SK-N-SH (cell line): ENCODE measurements at regions of chr17 and their contacts with region 1.

Region 1: GRCh38 chr17:29369831-29370735 is 20.1 kb upstream of the TAOK1 start:
- DNase-seq: peak; percentile 70
- H3K4me3 ChIP-seq: peak overlapping the region; percentile 23 to 60; a peak in 3 of 4 replicates
- H3K27ac ChIP-seq: peak overlapping the region; percentile 4 to 47; a peak in 2 of 4 replicates
- H3K4me1 ChIP-seq: peaks cover 0 to 10% of the 10 kb centered on the region in 2 experiments; a peak in 2 of 4 replicates
- H3K27me3 ChIP-seq: no peaks in the 10 kb centered on the region
- CTCF ChIP-seq: peak; percentile 77
- EP300 ChIP-seq: no peak
- RAD21 ChIP-seq: peak; percentile 82

Region 2: DNA sequence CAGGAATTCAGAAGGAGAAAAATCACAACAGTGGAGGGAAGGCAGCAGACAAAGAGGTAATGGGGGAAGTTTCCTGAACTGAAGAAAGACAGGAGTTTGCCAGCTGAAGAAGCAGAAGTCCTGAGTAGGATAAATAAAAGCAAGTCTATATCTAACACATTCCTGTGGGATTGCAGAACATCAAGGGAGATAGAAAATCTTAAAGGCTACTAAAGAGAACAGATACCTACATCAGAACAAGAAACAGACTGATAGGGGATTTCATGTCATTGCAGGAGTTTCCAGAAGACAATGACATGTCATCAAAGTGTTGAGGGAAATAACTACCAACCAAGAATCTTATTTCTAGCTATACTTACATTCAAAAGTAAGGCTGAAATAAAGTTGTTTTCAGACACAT is 144.7 kb before region 1 on chr17:
- CTCF ChIA-PET with region 1: no interaction called
- POLR2A ChIA-PET with region 1: no interaction called
- DNase-seq: no peak
- H3K4me3 ChIP-seq: no peak overlapping the region
- H3K27ac ChIP-seq: no peak overlapping the region
- H3K4me1 ChIP-seq: peaks cover 0 to 4% of the 10 kb centered on the region in 2 experiments; a peak in 1 of 4 replicates
- H3K27me3 ChIP-seq: no peaks in the 10 kb centered on the region
- CTCF ChIP-seq: no peak
- EP300 ChIP-seq: no peak
- RAD21 ChIP-seq: no peak

Region 3: GRCh38 chr17:29273924-29274323 is 96.2 kb before region 1 on chr17:
- CTCF ChIA-PET with region 1: no interaction called
- POLR2A ChIA-PET with region 1: no interaction called
- DNase-seq: no peak
- H3K4me3 ChIP-seq: no peak overlapping the region
- H3K27ac ChIP-seq: no peak overlapping the region
- H3K4me1 ChIP-seq: no peaks in the 10 kb centered on the region; a peak in 1 of 4 replicates
- H3K27me3 ChIP-seq: no peaks in the 10 kb centered on the region
- CTCF ChIP-seq: no peak
- EP300 ChIP-seq: no peak
- RAD21 ChIP-seq: no peak

Region 4: GRCh38 chr17:29357821-29358232 is 12.3 kb before region 1 on chr17:
- CTCF ChIA-PET with region 1: interaction called, 34 read pairs
- POLR2A ChIA-PET with region 1: no interaction called
- DNase-seq: no peak
- H3K4me3 ChIP-seq: no peak overlapping the region
- H3K27ac ChIP-seq: no peak overlapping the region
- H3K4me1 ChIP-seq: peaks cover 0 to 11% of the 10 kb centered on the region in 2 experiments; a peak in 1 of 4 replicates
- H3K27me3 ChIP-seq: no peaks in the 10 kb centered on the region
- CTCF ChIP-seq: no peak
- EP300 ChIP-seq: no peak
- RAD21 ChIP-seq: no peak

Region 5: DNA sequence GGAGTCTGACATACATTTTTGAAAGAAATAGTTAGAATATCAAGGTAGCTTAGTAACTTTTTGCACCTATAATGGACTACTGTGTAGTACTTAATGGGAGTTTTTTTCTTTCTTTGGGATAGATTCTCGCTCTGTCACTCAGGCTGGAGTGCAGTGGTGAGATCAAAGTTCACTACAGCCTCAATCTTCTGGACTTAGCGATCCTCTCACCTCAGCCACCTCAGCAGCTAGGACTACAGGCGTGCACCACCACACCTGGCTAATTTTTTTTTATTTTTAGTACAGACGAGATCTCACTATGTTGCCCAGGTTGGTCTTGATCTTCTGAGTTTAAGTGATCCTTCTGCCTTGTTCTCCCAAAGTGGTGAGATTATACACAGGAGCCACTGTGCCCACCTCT is 29.6 kb after region 1 on chr17:
- CTCF ChIA-PET with region 1: interaction called, 10 read pairs
- POLR2A ChIA-PET with region 1: no interaction called
- DNase-seq: no peak
- H3K4me3 ChIP-seq: no peak overlapping the region
- H3K27ac ChIP-seq: no peak overlapping the region
- H3K4me1 ChIP-seq: no peaks in the 10 kb centered on the region
- H3K27me3 ChIP-seq: no peaks in the 10 kb centered on the region
- CTCF ChIP-seq: no peak
- EP300 ChIP-seq: no peak
- RAD21 ChIP-seq: no peak

Region 6: DNA sequence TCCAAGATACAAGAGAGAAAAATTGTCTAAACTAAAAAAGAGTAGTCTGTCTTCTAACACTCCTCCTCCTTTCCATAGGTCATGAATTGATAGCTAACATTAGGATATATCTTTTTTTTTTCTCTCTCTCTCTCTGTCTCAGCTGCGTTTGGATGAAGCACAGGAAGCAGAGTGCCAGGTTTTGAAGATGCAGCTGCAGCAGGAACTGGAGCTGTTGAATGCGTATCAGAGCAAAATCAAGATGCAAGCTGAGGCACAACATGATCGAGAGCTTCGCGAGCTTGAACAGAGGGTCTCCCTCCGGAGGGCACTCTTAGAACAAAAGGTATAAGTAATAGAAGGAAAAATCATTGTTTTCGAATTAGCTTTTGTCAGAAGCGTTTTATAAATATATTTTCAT is 163.9 kb after region 1 on chr17:
- CTCF ChIA-PET with region 1: interaction called, 75 read pairs
- POLR2A ChIA-PET with region 1: no interaction called
- DNase-seq: no peak
- H3K4me3 ChIP-seq: no peak overlapping the region
- H3K27ac ChIP-seq: no peak overlapping the region
- H3K4me1 ChIP-seq: no peaks in the 10 kb centered on the region
- H3K27me3 ChIP-seq: no peaks in the 10 kb centered on the region
- CTCF ChIP-seq: no peak
- EP300 ChIP-seq: no peak
- RAD21 ChIP-seq: no peak

Region 7: DNA sequence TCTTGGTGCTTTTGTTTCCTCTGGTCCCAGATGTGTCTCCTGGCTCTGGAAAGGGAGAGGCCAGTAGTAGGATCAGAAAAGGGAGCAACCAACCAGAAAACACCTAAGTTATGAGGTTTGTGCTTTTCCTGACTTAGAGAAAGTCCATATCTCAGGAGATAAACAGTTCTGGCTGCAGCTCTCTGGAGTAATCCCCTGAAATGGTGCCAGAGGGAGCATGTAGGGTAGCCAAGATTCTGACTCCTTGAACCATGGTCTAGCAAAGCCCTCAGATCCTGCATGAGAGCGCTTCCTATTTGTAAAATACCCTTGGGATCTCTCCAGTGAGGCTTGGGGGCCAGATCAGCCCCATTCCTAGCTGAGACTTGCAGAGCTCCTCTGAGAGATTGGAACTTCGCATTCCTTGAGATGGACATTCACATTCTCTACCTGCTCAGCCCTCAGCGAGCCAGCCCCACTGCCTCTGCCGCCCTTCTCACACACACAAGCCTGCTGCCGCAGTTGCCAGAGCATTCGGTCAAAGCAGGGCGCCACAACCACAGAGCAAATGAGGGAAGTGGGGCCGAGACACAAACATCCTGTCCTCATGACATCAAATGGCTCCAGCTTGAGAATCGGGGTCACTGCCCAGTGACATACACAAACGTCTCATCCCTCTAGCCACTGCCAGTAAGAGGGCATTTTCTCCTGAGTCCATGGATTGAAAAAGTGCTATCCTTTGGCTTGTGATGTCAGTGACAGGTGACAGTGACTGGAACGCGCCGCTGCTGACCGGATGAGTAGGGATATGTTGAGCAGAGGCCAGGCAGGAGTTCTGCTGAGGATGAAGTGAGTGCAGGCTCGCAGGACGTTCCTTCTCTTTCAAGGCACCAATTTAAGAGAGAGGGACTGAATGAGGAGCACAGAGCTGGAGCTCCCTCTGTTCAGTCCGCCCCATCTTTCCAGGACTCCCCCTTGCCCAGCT is 191.8 kb after region 1 on chr17:
- CTCF ChIA-PET with region 1: interaction called, 144 read pairs
- POLR2A ChIA-PET with region 1: no interaction called
- DNase-seq: no peak
- H3K4me3 ChIP-seq: no peak overlapping the region
- H3K27ac ChIP-seq: no peak overlapping the region
- H3K4me1 ChIP-seq: peaks cover 0 to 8% of the 10 kb centered on the region in 2 experiments; a peak in 1 of 4 replicates
- H3K27me3 ChIP-seq: no peaks in the 10 kb centered on the region
- CTCF ChIP-seq: no peak
- EP300 ChIP-seq: no peak
- RAD21 ChIP-seq: no peak

Region 8: DNA sequence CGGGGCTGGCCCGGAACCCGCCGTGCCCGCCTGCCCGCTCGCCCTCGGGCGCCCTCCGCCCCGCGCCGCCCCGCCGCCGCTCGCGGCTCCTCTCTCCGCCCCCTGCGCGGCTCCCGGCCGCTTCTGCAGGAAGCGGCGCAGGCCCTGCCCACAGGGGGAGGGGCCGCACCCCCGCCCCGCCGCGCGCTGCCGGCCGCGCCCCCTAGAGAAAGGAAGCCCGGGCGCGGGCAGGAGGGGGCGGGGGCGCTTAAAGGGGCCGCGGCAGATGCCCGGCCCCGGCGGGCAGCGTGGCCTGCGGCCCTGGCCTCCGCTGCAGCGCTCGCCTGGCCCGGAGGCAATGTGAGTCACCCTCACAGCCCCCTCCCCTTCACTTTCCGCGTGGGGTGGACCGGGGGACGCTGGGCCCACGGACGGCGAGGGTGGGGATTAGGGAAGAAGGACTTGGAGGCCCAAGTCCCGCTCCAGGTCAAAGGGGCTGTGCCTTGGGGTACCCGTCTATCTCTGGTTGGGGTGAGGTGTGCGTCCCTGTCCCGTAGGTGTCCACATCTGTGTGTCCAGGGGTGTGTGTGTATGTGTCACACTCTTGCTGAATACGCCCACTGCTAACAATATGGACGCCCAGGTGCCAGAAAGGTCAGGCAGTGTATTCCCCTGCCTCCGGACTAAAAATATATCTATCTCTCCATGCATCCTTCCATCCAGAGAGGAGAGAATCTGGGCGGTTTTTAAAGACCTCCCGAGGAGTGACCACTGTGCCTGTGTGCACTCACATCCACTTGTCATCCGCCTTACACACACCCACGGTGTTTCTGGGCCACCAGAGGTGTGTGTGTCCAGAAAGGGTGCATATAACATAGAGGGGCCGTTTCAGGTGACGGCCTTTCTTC is 219.7 kb after region 1 on chr17 and contains the start of gene GIT1:
- CTCF ChIA-PET with region 1: interaction called, 11 read pairs
- POLR2A ChIA-PET with region 1: no interaction called
- DNase-seq: peak; percentile 98
- H3K4me3 ChIP-seq: peak within 1 kb of the TSS; percentile 89 to 91
- H3K27ac ChIP-seq: peak within 1 kb of the TSS; percentile 64 to 91
- H3K4me1 ChIP-seq: peaks cover 41 to 65% of the 10 kb centered on the region in 2 experiments
- H3K27me3 ChIP-seq: no peaks in the 10 kb centered on the region
- CTCF ChIP-seq: no peak
- EP300 ChIP-seq: no peak
- RAD21 ChIP-seq: no peak
- polyA plus RNA-seq, gene GIT1: 39.4 and 42.9 TPM in 2 replicates